ENCODE measurements at regions of chr13 and their contacts with region 1.

Region 1: GRCh38 chr13:48580185-48580803 is 47.4 kb upstream of the RCBTB2 start:
- DNase-seq: peak; percentile 75
- H3K4me3 Mint-ChIP-seq: no peak overlapping the region
- H3K27ac Mint-ChIP-seq: no peak overlapping the region
- H3K4me1 Mint-ChIP-seq: peaks cover 5% of the 10 kb centered on the region
- H3K27me3 Mint-ChIP-seq: no peaks in the 10 kb centered on the region
- CTCF ChIP-seq: peak; percentile 68

Region 2: GRCh38 chr13:48126944-48127830 is 453.1 kb before region 1 on chr13:
- CTCF ChIA-PET with region 1: interaction called, 9 read pairs
- POLR2A ChIA-PET with region 1: interaction called, 4 read pairs
- intact Hi-C with region 1: loop called (anchors 1 kb)
- DNase-seq: peak; percentile 82
- H3K4me3 Mint-ChIP-seq: no peak overlapping the region
- H3K27ac Mint-ChIP-seq: peak overlapping the region; percentile 64
- H3K4me1 Mint-ChIP-seq: peaks cover 21% of the 10 kb centered on the region
- H3K27me3 Mint-ChIP-seq: no peaks in the 10 kb centered on the region
- CTCF ChIP-seq: peak; percentile 64

Region 3: DNA sequence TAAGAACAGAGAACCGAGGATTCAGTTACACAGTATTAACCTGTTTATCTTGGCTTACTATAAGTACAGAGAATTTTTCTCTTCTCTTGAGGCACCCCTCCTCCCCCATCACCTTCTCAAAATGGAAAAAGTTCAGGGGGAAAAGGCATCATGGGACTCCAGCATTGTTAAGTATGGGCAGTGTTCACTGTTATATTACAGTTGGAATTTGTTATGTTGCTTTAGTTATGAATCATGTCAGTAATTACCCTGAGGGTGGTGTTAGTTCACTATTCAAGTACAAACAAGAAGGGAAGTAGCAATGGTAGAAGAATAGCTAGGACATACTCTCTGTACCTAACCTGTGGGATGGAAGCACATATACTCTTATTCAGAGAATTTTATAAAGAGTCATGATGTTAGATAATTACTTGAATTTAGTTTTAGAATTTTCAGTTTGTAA is 179.4 kb before region 1 on chr13:
- CTCF ChIA-PET with region 1: interaction called, 5 read pairs
- POLR2A ChIA-PET with region 1: interaction called, 13 read pairs
- intact Hi-C with region 1: loop called (anchors 1 kb)
- DNase-seq: peak; percentile 90
- H3K4me3 Mint-ChIP-seq: peak overlapping the region; percentile 50
- H3K27ac Mint-ChIP-seq: peak overlapping the region; percentile 94
- H3K4me1 Mint-ChIP-seq: peaks cover 42% of the 10 kb centered on the region
- H3K27me3 Mint-ChIP-seq: no peaks in the 10 kb centered on the region
- CTCF ChIP-seq: peak; percentile 8

Region 4: DNA sequence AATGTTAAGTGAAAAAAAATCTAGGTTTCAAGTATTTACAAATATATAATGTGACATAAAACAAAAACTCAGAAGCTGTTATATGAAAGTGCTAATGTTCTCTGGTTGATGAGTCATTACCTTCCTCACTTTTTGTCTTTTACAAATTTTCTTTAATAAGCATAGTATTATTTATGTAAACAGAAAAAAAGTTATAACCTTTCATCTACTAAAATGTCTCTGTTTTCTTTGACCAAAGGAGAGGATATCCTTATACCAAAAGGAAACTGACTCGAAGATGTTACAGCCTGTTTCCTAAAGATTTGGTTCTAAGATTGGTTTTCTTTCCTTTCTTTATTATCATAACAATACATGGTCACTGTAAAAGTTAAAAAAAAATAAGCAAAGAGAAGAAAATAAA is 85.4 kb before region 1 on chr13:
- CTCF ChIA-PET with region 1: no interaction called
- POLR2A ChIA-PET with region 1: no interaction called
- intact Hi-C with region 1: no loop called
- DNase-seq: no peak
- H3K4me3 Mint-ChIP-seq: no peak overlapping the region
- H3K27ac Mint-ChIP-seq: no peak overlapping the region
- H3K4me1 Mint-ChIP-seq: no peaks in the 10 kb centered on the region
- H3K27me3 Mint-ChIP-seq: no peaks in the 10 kb centered on the region
- CTCF ChIP-seq: no peak

Region 5: GRCh38 chr13:48590141-48590863 is 10.0 kb after region 1 on chr13:
- CTCF ChIA-PET with region 1: interaction called, 10 read pairs
- POLR2A ChIA-PET with region 1: interaction called, 3 read pairs
- intact Hi-C with region 1: no loop called
- DNase-seq: no peak
- H3K4me3 Mint-ChIP-seq: no peak overlapping the region
- H3K27ac Mint-ChIP-seq: no peak overlapping the region
- H3K4me1 Mint-ChIP-seq: peaks cover 14% of the 10 kb centered on the region
- H3K27me3 Mint-ChIP-seq: no peaks in the 10 kb centered on the region
- CTCF ChIP-seq: no peak

Region 6: DNA sequence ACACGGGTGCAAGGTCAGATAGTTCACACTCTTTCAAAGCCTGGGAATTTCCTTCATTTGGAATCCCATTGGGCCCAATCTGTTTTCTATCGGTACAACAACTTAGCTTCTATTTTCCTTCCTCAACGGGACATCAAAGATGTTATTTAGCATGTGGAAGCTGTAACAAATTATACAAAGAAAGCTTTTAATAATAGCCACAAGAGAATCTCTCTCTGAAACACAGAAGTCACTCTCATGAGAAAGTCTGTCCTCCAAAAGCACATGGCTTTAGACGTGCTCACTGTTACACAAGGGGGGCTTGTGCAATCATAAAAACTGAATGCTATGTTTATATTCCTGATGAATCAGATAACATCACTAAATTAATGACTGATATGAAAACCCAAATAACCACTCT is 44.6 kb after region 1 on chr13:
- CTCF ChIA-PET with region 1: no interaction called
- POLR2A ChIA-PET with region 1: no interaction called
- intact Hi-C with region 1: no loop called
- DNase-seq: peak; percentile 30
- H3K4me3 Mint-ChIP-seq: no peak overlapping the region
- H3K27ac Mint-ChIP-seq: no peak overlapping the region
- H3K4me1 Mint-ChIP-seq: no peaks in the 10 kb centered on the region
- H3K27me3 Mint-ChIP-seq: no peaks in the 10 kb centered on the region
- CTCF ChIP-seq: no peak